Activated B cell treated with CpG ODN at 0.5 μM for 24 hours (primary cell): ENCODE measurements at regions of chr7 and their contacts with region 1.

Region 1: DNA sequence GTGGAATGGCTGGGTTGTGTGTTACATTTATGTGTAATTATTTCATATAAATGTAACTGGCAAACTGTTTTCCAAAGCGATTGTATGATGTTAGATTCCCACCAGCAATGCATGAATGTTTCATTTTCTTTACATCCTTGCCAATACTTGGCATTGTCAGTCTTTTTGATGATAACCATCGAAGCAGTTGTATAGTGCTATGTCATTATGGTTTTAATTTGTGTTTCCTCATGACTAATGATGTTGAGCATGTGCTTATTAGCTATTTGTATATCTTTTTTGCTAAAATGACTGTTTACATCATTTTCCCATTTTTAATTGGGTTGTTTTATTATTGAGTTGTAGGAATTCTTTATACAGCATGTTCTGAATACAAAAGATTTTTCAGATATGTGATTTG is 22.3 kb downstream of the AHCYL2 start:
- DNase-seq: no peak
- ATAC-seq: no peak
- H3K4me3 Mint-ChIP-seq: no peak overlapping the region
- H3K27ac Mint-ChIP-seq: no peak overlapping the region
- H3K4me1 Mint-ChIP-seq: peaks cover 5% of the 10 kb centered on the region
- H3K27me3 Mint-ChIP-seq: no peaks in the 10 kb centered on the region
- CTCF ChIP-seq: no peak

Region 2: DNA sequence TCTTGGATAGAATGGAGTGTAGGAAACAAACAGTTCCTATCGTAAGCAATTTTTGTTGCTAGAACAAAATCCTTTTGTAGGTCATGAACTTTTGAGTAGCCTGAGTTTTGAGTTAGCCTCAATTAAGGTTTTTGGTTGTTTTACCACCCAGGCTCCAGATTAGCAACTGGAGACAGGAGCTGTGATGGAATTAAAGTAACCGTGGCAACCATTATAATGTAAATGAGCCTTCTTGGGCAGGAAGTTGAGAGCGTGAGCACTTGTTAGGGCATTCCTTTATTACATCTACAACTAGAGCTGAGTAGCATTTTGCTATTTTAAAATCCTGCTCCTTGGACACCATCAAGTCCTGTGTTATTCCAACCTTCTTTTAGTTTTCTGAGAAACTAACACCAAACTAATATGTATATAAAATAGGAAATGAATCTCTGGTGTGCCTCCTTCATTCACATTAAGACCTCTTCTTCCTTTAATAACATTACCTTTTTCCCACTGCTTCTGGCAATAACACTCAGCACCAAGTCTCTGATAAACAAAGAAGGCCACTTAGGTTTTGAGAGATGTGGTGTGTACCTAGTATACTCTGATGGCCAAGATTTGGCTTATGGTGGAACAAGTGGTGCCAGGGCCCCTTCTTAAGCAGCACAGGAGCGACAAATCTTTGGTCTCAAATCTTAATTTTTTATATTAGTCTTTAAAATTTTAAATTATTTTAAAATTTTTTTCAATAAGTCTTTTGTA is 11.7 kb after region 1 on chr7:
- CTCF ChIA-PET with region 1: interaction called, 3 read pairs
- POLR2A ChIA-PET with region 1: no interaction called
- intact Hi-C with region 1: loop called (anchors 2 kb)
- DNase-seq: no peak
- ATAC-seq: no peak
- H3K4me3 Mint-ChIP-seq: no peak overlapping the region
- H3K27ac Mint-ChIP-seq: no peak overlapping the region
- H3K4me1 Mint-ChIP-seq: peaks cover 26% of the 10 kb centered on the region
- H3K27me3 Mint-ChIP-seq: no peaks in the 10 kb centered on the region
- CTCF ChIP-seq: no peak